Right lobe of liver (tissue), 6 donors: ENCODE measurements at regions of chr1 and their contacts with region 1.

Region 1: GRCh38 chr1:204685236-204686006 is at the start of gene LRRN2:
- DNase-seq: peak in 1 of 3 donors; percentile 37
- ATAC-seq: peak; percentile 46 to 68 (median 56)
- H3K4me3 ChIP-seq: peak within 1 kb of the TSS; percentile 12 to 41 (median 23)
- H3K27ac ChIP-seq: no peak within 1 kb of the TSS
- H3K4me1 ChIP-seq: peaks cover 0 to 11% (median 0%) of the 10 kb centered on the region in 4 donors
- H3K27me3 ChIP-seq: no peaks in the 10 kb centered on the region
- CTCF ChIP-seq: no peak
- POLR2A ChIP-seq: no peak
- total RNA-seq, gene LRRN2: 0.07 to 0.78 (median 0.25) TPM

Region 2: GRCh38 chr1:204730826-204731459 is 45.5 kb after region 1 on chr1:
- intact Hi-C with region 1: loop called in 1 of 2 experiments (anchors 10 kb)
- DNase-seq: no peak
- ATAC-seq: no peak
- H3K4me3 ChIP-seq: no peak overlapping the region
- H3K27ac ChIP-seq: no peak overlapping the region
- H3K4me1 ChIP-seq: no peaks in the 10 kb centered on the region
- H3K27me3 ChIP-seq: no peaks in the 10 kb centered on the region
- CTCF ChIP-seq: no peak
- POLR2A ChIP-seq: no peak